Activated CD8-positive, alpha-beta T cell treated with anti-CD3 and anti-CD28 coated beads for 36 hours (primary cell): ENCODE measurements at regions of chr5 and their contacts with region 1.

Region 1: GRCh38 chr5:170100066-170100943 is 5.4 kb upstream of the FOXI1 start:
- DNase-seq: peak; percentile 91
- ATAC-seq: peak; percentile 77
- H3K4me3 Mint-ChIP-seq: no peak overlapping the region
- H3K27ac Mint-ChIP-seq: no peak overlapping the region
- H3K4me1 Mint-ChIP-seq: no peaks in the 10 kb centered on the region
- H3K27me3 Mint-ChIP-seq: no peaks in the 10 kb centered on the region
- CTCF ChIP-seq: peak; percentile 82

Region 2: GRCh38 chr5:170183816-170184687 is 83.7 kb after region 1 on chr5:
- CTCF ChIA-PET with region 1: interaction called, 18 read pairs
- POLR2A ChIA-PET with region 1: no interaction called
- intact Hi-C with region 1: loop called (anchors 5 kb)
- DNase-seq: peak; percentile 66
- ATAC-seq: peak; percentile 72
- H3K4me3 Mint-ChIP-seq: no peak overlapping the region
- H3K27ac Mint-ChIP-seq: no peak overlapping the region
- H3K4me1 Mint-ChIP-seq: no peaks in the 10 kb centered on the region
- H3K27me3 Mint-ChIP-seq: no peaks in the 10 kb centered on the region
- CTCF ChIP-seq: peak; percentile 92

Region 3: DNA sequence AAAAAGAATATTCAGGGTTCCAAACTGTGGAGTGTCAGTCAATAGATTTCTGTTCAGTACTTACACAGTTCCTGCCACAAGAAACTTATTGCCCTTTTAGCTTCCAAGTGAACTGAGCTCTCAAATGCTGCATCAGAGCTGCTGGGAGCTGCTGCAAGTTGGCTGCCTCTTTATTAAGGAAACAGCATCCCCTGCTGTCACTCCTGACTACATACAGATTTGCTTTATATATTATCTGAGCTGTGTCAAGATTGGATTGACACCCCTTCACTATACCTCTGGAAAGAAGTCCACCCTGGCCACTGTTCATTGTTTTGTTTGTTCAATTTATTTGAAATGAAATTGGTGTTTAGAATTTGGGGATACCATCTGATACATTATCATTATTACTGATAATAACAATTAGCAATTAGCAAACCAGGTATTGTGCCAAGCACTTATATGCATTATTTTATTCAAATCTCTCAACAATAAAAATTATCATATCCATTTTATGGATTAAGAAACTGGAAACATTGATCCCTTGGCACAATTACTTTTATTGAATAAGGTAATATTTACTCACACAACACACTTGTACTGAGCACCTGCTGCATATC is 116.1 kb after region 1 on chr5:
- CTCF ChIA-PET with region 1: interaction called, 12 read pairs
- POLR2A ChIA-PET with region 1: no interaction called
- intact Hi-C with region 1: loop called (anchors 2 kb)
- DNase-seq: no peak
- ATAC-seq: no peak
- H3K4me3 Mint-ChIP-seq: no peak overlapping the region
- H3K27ac Mint-ChIP-seq: no peak overlapping the region
- H3K4me1 Mint-ChIP-seq: no peaks in the 10 kb centered on the region
- H3K27me3 Mint-ChIP-seq: peaks cover 2% of the 10 kb centered on the region
- CTCF ChIP-seq: peak; percentile 28

Region 4: DNA sequence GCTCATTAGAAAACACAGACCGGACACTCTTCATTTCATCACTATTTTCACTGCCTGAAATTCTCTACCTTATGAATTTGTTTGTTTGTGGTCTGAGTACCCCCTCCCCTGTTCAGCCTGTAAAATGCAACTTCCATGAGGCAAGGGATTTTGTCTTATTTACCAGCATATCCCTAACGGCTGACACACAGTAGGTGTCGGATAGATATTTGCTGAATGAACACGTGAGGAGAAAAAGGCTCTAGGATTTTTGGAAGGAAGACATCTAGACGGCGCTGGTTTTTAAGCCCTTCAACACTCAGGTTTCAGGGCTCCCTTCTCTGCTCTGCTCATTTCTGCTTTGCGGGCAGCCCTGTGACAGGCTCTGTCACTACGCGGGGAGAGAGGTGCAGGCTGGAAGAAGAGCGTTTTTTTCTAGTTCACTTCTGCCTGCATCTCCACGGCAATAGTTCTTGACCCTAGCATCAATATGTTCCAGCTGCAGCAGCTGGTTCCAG is 247.9 kb after region 1 on chr5:
- CTCF ChIA-PET with region 1: interaction called, 3 read pairs
- POLR2A ChIA-PET with region 1: no interaction called
- intact Hi-C with region 1: loop called (anchors 10 kb)
- DNase-seq: no peak
- ATAC-seq: no peak
- H3K4me3 Mint-ChIP-seq: no peak overlapping the region
- H3K27ac Mint-ChIP-seq: no peak overlapping the region
- H3K4me1 Mint-ChIP-seq: no peaks in the 10 kb centered on the region
- H3K27me3 Mint-ChIP-seq: peaks cover 15% of the 10 kb centered on the region
- CTCF ChIP-seq: peak; percentile 23

Region 5: DNA sequence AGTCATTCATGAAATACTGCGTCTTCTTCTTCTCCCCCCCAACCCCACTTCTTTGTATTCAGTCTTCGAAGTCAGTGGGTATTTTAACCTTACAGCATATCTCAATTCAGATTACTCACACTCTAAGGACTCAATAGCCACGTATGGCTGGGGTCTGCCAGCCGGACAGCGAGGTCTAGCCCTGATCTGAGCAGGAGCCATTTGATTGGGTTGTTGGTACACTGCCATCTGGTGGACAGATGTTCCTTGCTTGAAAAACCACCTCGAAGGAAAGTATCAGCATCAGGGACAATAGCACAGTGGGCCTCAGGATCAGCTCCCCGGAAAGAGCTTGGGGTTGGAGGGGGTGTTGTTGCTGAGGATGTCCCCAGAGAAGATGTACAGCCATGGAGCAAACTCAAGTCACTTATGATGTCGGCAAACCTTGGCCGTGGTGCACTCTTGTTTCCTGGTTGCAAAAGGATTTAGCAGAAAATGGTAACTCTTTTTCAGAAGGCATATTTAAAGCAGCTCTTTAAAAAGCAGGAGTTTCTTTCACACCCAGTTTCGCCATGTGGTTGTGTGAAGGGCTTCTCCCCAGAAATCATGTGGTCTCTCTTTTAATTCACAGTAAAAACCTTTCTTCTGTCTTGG is 320.6 kb after region 1 on chr5:
- CTCF ChIA-PET with region 1: interaction called, 7 read pairs
- POLR2A ChIA-PET with region 1: interaction called, 3 read pairs
- intact Hi-C with region 1: loop called (anchors 5 kb)
- DNase-seq: peak; percentile 72
- ATAC-seq: peak; percentile 75
- H3K4me3 Mint-ChIP-seq: no peak overlapping the region
- H3K27ac Mint-ChIP-seq: no peak overlapping the region
- H3K4me1 Mint-ChIP-seq: peaks cover 12% of the 10 kb centered on the region
- H3K27me3 Mint-ChIP-seq: no peaks in the 10 kb centered on the region
- CTCF ChIP-seq: peak; percentile 67

Region 6: GRCh38 chr5:170451747-170452365 is 351.6 kb after region 1 on chr5:
- CTCF ChIA-PET with region 1: no interaction called
- POLR2A ChIA-PET with region 1: no interaction called
- intact Hi-C with region 1: no loop called
- DNase-seq: no peak
- ATAC-seq: no peak
- H3K4me3 Mint-ChIP-seq: no peak overlapping the region
- H3K27ac Mint-ChIP-seq: no peak overlapping the region
- H3K4me1 Mint-ChIP-seq: no peaks in the 10 kb centered on the region
- H3K27me3 Mint-ChIP-seq: no peaks in the 10 kb centered on the region
- CTCF ChIP-seq: no peak

Region 7: GRCh38 chr5:170614720-170615119 is 514.4 kb after region 1 on chr5:
- CTCF ChIA-PET with region 1: no interaction called
- POLR2A ChIA-PET with region 1: no interaction called
- intact Hi-C with region 1: loop called (anchors 10 kb)
- DNase-seq: peak; percentile 23
- ATAC-seq: no peak
- H3K4me3 Mint-ChIP-seq: no peak overlapping the region
- H3K27ac Mint-ChIP-seq: no peak overlapping the region
- H3K4me1 Mint-ChIP-seq: no peaks in the 10 kb centered on the region
- H3K27me3 Mint-ChIP-seq: peaks cover 3% of the 10 kb centered on the region
- CTCF ChIP-seq: no peak